ENCODE measurements at regions of chr7 and their contacts with region 1.

Region 1: DNA sequence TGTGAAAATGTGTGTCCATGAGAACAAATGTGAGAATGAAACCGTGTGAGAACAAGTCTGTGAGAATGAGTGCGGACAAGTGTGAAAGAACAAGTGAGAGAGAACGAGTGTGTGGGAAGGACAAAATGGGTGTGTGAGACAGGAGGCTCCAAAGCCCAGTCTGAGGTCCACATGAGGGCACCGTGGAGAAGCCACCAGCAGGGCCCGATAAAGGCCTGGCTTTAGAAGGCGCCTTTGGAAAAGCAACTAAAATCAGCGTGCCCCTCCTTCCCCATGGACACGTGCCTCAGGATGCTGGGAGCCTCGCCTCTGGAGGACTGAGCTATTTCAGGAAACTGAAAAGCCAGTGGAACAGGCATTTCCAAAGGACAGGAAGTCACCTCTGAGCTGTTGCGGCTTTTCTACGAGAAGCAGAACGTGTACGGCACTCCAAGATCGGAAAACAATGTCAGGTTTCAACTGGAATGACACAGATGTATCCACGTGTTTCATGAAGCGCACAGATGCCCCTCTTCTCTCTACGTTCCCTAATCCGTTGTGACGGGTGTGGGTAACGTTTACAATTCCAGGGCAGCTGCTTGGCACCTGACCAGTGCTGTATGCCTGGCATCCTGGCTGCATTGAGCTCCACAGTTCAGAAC is 46.4 kb downstream of the ESYT2 start:
- DNase-seq: peak; percentile 73 to 85 (median 83)
- ATAC-seq: peak; percentile 91 to 92 (median 92)
- H3K4me3 ChIP-seq: peak overlapping the region in 7 of 12 donors; percentile 9 to 35 (median 27)
- H3K27ac ChIP-seq: peak overlapping the region; percentile 59 to 90 (median 82)
- H3K4me1 ChIP-seq: peaks cover 0 to 65% (median 36%) of the 10 kb centered on the region in 12 donors
- H3K27me3 ChIP-seq: no peaks in the 10 kb centered on the region
- CTCF ChIP-seq: peak; percentile 16 to 76 (median 52)
- POLR2A ChIP-seq: peak in 1 of 2 donors; percentile 29

Region 2: DNA sequence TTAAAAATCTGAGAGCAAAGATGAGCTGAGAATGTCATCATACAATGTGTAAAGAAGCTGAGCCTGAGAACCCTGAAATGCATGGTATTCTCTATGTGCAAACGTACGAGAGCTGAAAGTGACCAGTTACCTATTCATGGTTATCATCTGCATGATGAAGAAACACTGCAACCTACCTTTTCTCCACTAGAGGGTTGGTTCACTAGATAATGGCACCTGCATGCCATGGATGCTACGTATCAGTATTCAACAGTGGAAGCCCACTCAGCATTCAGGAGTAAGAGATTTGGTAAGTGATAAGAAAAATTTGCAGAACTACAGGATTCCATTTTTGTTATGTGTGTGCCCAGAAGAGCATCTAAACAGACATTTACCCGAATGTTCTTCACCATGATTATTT is 340.6 kb before region 1 on chr7:
- intact Hi-C with region 1: no loop called
- DNase-seq: no peak
- ATAC-seq: no peak
- H3K4me3 ChIP-seq: no peak overlapping the region
- H3K27ac ChIP-seq: no peak overlapping the region
- H3K4me1 ChIP-seq: no peaks in the 10 kb centered on the region
- H3K27me3 ChIP-seq: peaks cover 0 to 25% (median 0%) of the 10 kb centered on the region in 9 donors
- CTCF ChIP-seq: no peak
- POLR2A ChIP-seq: no peak

Region 3: DNA sequence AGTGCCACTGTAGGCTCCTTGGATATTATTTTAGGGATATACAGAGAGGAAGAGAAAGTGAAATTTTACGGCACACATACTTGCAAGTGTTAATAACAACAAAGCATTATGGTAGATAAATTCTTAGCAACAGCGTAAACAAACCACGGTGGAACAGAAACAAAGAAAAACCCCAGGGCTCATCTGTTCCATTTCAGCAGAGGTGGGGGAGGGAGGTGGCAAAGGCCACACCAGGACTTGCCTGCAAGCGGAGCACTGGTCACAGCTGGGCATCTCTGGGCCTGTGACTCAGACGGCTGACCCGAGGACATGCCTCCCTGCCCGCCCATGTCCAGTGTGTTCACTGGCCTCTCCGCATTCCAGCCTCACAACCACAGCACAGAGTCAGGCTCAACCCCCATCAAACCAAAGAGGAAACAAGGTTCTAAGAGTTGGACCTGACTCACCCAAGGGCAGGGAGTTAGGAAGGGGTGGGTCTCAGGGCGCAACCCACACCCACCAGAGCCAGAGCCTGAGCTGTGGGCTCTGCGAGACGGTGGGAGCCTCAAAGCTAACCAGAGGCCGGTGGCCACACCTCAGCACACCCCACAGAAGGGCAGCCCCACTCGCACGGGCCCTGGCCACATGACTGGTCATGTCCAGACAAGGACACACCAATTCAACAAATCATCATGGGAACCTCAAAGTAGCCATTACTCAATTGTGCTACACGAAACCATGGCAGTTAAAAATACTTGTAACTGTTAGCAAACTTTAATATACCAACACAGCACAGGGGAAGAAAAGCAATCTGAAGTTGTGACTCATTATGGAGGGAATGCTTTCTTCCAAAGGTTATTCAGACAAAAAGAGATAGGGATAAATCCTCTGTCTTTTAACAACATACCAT is 35.7 kb after region 1 on chr7:
- intact Hi-C with region 1: loop called in 2 of 10 experiments (anchors 5 kb)
- DNase-seq: peak; percentile 86 to 96 (median 90)
- ATAC-seq: peak; percentile 91 to 93 (median 91)
- H3K4me3 ChIP-seq: peak overlapping the region in 10 of 12 donors; percentile 0 to 47 (median 34)
- H3K27ac ChIP-seq: peak overlapping the region; percentile 86 to 97 (median 90)
- H3K4me1 ChIP-seq: peaks cover 17 to 91% (median 79%) of the 10 kb centered on the region in 12 donors
- H3K27me3 ChIP-seq: no peaks in the 10 kb centered on the region
- CTCF ChIP-seq: peak in 1 of 12 donors; percentile 20
- POLR2A ChIP-seq: peak in 1 of 2 donors; percentile 73

Region 4: DNA sequence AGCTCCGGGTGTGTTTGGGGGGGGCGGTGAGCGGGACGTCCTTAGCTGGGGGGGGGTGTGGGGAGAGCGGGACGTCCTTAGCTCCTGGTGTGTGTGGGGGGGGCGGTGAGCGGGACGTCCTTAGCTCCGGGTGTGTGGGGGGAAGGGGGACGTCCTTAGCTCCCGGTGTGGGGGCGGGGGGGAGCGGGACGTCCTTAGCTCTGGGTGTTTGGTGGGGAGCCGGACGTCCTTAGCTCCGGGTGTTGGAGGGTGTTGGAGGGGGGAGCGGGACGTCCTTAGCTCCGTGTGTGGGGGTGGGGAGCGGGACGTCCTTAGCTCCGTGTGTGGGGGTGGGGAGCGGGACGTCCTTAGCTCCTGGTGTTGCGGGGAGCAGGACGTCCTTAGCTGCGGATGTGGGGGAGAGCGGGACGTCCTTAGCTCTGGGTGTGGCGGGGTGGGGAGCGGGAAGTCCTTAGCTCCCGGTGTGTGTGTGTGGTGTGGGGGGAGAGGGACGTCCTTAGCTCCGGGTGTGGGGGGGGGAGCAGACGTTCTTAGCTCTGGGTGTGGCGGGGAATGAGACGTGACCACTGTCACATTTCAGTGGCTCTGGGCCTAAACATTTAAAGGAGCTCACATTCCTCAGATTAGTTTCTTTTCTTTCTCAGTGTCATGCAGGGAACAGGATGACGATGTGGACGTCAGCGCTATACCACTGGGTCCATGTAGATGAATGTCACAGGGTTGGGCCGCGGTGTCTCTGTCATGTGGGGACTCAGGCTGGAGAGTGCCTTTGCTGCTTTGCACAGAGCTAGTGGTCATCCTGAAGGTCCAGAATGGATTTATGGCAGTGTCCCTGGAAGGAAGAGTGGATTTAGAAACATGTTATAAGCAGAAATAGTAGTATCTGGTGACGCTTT is 81.0 kb after region 1 on chr7:
- intact Hi-C with region 1: loop called in 1 of 10 experiments (anchors 10 kb)
- DNase-seq: peak; percentile 82 to 93 (median 89)
- ATAC-seq: peak; percentile 84 to 91 (median 89)
- H3K4me3 ChIP-seq: peak overlapping the region in 11 of 12 donors; percentile 27 to 59 (median 55)
- H3K27ac ChIP-seq: peak overlapping the region; percentile 85 to 98 (median 92)
- H3K4me1 ChIP-seq: peaks cover 4 to 56% (median 30%) of the 10 kb centered on the region in 12 donors
- H3K27me3 ChIP-seq: no peaks in the 10 kb centered on the region
- CTCF ChIP-seq: no peak
- POLR2A ChIP-seq: peak in 1 of 2 donors; percentile 56

Region 5: GRCh38 chr7:158924956-158925355 is 142.1 kb after region 1 on chr7:
- intact Hi-C with region 1: no loop called
- DNase-seq: no peak
- ATAC-seq: no peak
- H3K4me3 ChIP-seq: no peak overlapping the region
- H3K27ac ChIP-seq: no peak overlapping the region
- H3K4me1 ChIP-seq: peaks cover 0 to 5% (median 0%) of the 10 kb centered on the region in 12 donors
- H3K27me3 ChIP-seq: no peaks in the 10 kb centered on the region
- CTCF ChIP-seq: no peak
- POLR2A ChIP-seq: no peak

Region 6: DNA sequence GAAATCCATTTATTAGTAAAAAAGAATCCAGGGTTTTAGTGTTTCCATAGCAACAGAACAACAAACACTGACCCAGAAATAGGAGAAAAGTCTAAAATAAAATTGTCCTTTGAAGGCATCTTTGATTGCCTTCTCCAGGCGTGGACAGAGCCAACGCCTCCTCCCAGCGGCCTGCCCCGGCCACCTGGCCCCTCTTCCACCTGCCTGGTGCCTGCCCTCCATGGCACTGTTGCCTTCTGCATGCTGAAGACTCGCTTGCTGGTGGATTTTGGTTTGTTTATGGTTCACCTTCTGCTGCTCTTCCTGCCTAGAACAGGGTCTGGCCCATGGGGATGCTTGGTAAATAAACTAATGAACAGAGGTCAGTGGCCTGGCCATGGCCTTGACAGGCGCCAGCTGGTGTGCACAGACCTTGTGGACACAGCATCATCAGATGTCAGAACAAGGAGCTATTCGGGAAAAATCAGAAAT is 180.9 kb after region 1 on chr7:
- intact Hi-C with region 1: loop called in 1 of 10 experiments (anchors 10 kb)
- DNase-seq: peak in 3 of 5 donors; percentile 45 to 69 (median 51)
- ATAC-seq: peak; percentile 59 to 79 (median 65)
- H3K4me3 ChIP-seq: no peak overlapping the region
- H3K27ac ChIP-seq: peak overlapping the region in 1 of 12 donors; percentile 66
- H3K4me1 ChIP-seq: peaks cover 0 to 23% (median 0%) of the 10 kb centered on the region in 12 donors
- H3K27me3 ChIP-seq: peaks cover 0 to 8% (median 5%) of the 10 kb centered on the region in 9 donors
- CTCF ChIP-seq: no peak
- POLR2A ChIP-seq: no peak

Region 7: DNA sequence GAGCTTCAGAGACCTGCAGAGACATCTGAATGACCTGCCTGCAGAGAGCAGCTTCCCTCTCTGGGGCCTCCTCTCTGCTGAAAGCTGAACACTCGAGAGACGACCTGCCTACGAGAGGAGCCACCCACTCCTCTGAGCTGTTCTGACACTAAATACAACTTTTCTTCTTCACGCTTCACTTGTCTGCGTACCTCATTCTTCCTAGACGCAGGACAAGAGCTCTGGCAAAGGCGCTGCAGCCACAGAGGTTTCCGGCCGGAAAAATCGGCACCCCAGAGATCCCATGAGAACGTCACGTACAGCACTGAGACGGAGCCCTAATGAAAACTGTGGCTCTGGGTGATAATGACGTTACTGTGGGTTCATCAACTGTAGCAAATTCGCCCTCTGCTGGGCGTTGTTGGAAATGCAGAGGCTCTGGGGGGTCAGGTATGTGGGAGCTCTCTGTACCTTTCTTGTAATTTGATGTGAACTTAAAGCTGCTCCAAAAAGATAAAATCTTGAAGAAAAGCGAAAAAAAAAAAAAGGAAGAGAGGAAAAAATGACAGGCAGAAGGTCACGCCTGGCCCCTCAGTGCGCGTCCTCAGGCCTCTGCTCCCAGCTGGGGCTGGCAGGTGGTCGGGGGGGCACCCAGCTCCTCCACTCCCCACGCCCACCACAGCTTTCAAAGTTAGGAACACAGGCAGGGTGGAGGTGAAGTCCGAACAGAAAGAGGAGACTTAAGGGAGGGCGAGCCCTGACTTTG is 194.1 kb after region 1 on chr7:
- intact Hi-C with region 1: loop called in 4 of 10 experiments (anchors 5 to 10 kb)
- DNase-seq: peak; percentile 73 to 90 (median 81)
- ATAC-seq: peak; percentile 82 to 89 (median 85)
- H3K4me3 ChIP-seq: peak overlapping the region in 10 of 12 donors; percentile 12 to 58 (median 43)
- H3K27ac ChIP-seq: peak overlapping the region in 5 of 12 donors; percentile 28 to 52 (median 31)
- H3K4me1 ChIP-seq: peaks cover 0 to 19% (median 6%) of the 10 kb centered on the region in 12 donors
- H3K27me3 ChIP-seq: no peaks in the 10 kb centered on the region
- CTCF ChIP-seq: peak; percentile 84 to 95 (median 89)
- POLR2A ChIP-seq: no peak

Measured in heart left ventricle (tissue), 16 donors.